Activated CD4-positive, alpha-beta T cell treated with anti-CD3 and anti-CD28 coated beads, Interleukin-2, amount 10 ng/mL, durations not matched to agents 24 days and 14 days (primary cell): ENCODE measurements at regions of chr4 and their contacts with region 1.

Region 1: DNA sequence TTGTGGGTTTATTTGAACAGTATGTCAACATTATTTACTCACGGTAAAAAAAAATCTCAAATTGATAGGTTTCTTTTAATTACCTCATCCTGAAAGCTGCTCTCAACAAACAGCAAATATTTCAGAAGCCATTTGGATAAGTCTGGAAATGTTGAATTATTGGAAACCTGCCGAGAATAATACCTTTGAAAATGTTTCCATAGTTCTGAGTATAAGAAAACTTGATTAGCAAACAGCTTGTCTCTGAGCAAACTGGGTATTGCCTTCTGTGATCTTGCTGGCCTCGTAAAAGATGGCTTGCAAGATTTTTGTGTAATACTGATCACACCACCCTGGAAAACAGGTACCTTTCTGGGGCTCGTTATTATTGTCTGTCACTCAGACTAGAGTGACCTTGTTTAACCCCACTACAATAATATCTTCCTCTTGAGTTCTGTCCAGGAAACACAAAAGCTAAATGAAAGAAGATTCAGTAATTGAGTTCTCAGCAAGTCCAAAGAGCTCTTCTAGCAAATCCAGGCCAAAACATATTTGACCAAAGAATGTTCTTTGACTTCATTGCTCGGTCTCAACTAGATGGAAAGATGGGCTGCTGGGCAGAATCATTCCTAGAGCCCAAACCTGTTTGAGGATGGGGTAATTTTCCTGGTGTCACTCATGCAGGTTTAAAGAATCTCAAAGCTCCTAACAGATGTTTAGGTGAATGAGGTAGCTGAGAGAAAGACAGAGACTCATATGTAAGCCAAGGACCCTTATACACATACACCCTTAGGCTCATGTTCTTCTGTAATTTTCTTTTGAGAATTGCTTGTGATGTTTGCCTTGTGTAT is 255.6 kb upstream of the JADE1 start:
- DNase-seq: no peak
- H3K4me3 Mint-ChIP-seq: peak overlapping the region; percentile 92
- H3K27ac Mint-ChIP-seq: peak overlapping the region; percentile 23
- H3K4me1 Mint-ChIP-seq: peaks cover 12% of the 10 kb centered on the region
- H3K27me3 Mint-ChIP-seq: peaks cover 36% of the 10 kb centered on the region

Region 2: GRCh38 chr4:128454281-128455075 is 99.4 kb before region 1 on chr4:
- intact Hi-C with region 1: loop called (anchors 5 kb)
- DNase-seq: peak; percentile 84
- H3K4me3 Mint-ChIP-seq: no peak overlapping the region
- H3K27ac Mint-ChIP-seq: no peak overlapping the region
- H3K4me1 Mint-ChIP-seq: peaks cover 7% of the 10 kb centered on the region
- H3K27me3 Mint-ChIP-seq: no peaks in the 10 kb centered on the region

Region 3: DNA sequence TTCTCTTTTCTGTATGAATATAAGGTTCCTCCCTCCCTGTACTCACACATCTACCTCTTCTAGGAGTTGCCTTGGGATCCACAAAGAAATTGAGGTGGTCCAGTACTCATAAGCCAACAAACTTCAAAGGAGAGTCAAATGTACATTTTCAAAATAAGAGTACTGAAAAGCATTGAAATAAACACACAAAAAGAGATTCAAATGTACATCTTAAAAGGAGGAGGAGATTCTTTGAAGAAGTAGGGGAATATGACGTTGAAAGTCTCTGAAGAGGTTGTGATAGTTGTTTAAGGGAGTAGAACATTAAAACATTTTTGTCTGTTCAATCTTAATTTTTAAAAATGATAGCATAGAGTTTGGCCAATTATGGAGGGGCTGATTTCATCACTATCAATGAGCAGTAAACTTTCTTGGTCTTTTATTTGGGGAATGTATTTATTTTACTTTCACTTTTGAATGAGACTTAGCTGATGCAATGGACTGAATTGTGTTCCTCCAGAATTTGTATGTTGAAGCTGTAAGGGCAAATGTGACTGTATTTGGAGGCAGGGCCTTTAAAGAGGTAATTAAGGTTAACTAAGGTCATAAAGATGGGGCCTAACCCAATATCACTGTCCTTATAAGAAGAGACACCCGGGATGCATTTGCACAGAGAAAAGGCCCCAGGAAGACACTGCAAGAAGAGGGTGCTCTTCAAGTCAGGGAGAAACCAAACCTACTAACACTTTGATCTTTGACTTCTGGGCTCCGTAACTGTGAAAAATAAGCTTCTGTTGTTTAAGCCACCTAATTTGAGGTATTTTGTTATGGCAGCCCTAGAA is 40.0 kb before region 1 on chr4:
- intact Hi-C with region 1: loop called (anchors 2 kb)
- DNase-seq: peak; percentile 61
- H3K4me3 Mint-ChIP-seq: peak overlapping the region; percentile 49
- H3K27ac Mint-ChIP-seq: peak overlapping the region; percentile 78
- H3K4me1 Mint-ChIP-seq: peaks cover 18% of the 10 kb centered on the region
- H3K27me3 Mint-ChIP-seq: no peaks in the 10 kb centered on the region